ENCODE measurements at regions of chr17 and their contacts with region 1.

Region 1: DNA sequence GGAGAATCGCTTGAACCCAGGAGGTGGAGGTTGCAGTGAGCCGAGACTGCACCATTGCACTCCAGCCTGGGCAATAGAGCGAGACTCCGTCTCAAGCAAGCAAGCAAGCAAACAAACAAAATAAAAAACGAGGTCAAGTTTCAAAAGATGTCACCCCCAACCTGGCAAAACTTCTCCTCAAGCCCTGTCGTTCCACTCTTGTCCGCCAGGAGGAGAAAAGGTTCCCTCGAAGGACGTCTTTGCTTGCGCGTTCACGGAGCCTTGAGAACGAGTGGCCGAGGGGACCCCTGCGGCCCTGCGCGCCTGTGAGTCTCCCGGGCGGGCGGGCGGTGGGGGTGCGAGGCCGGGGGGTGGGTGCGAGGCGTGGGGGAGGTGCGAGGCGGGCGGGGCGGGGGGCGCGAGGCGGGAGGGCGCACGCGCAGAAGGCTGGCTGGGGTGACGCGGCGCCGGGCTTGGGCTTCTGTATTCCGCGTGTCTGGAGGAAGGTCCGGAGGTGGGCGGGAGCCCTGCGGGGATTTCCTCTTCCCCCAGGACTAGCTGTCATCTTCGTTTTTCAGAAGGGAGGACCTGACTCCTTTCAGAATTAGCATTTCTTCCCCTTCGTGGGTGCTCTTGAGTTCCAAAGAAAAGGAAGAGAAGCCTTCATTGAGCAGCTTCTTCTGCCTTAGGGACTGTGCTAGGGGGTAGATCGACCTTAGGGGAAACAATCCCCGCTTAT is 3.7 kb downstream of the SLC52A1 start:
- DNase-seq: peak; percentile 87
- H3K4me3 Mint-ChIP-seq: peak overlapping the region; percentile 77
- H3K27ac Mint-ChIP-seq: peak overlapping the region; percentile 94
- H3K4me1 Mint-ChIP-seq: peaks cover 30% of the 10 kb centered on the region
- H3K27me3 Mint-ChIP-seq: no peaks in the 10 kb centered on the region

Region 2: GRCh38 chr17:4858882-4859260 is 172.7 kb before region 1 on chr17:
- CTCF ChIA-PET with region 1: no interaction called
- POLR2A ChIA-PET with region 1: no interaction called
- DNase-seq: no peak
- H3K4me3 Mint-ChIP-seq: no peak overlapping the region
- H3K27ac Mint-ChIP-seq: no peak overlapping the region
- H3K4me1 Mint-ChIP-seq: peaks cover 16% of the 10 kb centered on the region
- H3K27me3 Mint-ChIP-seq: no peaks in the 10 kb centered on the region

Region 3: GRCh38 chr17:5011928-5012327 is 19.6 kb before region 1 on chr17:
- CTCF ChIA-PET with region 1: interaction called, 11 read pairs
- POLR2A ChIA-PET with region 1: no interaction called
- DNase-seq: no peak
- H3K4me3 Mint-ChIP-seq: no peak overlapping the region
- H3K27ac Mint-ChIP-seq: no peak overlapping the region
- H3K4me1 Mint-ChIP-seq: peaks cover 20% of the 10 kb centered on the region
- H3K27me3 Mint-ChIP-seq: no peaks in the 10 kb centered on the region

Region 4: GRCh38 chr17:5019475-5019956 is 12.0 kb before region 1 on chr17:
- CTCF ChIA-PET with region 1: interaction called, 14 read pairs
- POLR2A ChIA-PET with region 1: interaction called, 3 read pairs
- DNase-seq: peak; percentile 32
- H3K4me3 Mint-ChIP-seq: no peak overlapping the region
- H3K27ac Mint-ChIP-seq: no peak overlapping the region
- H3K4me1 Mint-ChIP-seq: peaks cover 25% of the 10 kb centered on the region
- H3K27me3 Mint-ChIP-seq: no peaks in the 10 kb centered on the region

Region 5: DNA sequence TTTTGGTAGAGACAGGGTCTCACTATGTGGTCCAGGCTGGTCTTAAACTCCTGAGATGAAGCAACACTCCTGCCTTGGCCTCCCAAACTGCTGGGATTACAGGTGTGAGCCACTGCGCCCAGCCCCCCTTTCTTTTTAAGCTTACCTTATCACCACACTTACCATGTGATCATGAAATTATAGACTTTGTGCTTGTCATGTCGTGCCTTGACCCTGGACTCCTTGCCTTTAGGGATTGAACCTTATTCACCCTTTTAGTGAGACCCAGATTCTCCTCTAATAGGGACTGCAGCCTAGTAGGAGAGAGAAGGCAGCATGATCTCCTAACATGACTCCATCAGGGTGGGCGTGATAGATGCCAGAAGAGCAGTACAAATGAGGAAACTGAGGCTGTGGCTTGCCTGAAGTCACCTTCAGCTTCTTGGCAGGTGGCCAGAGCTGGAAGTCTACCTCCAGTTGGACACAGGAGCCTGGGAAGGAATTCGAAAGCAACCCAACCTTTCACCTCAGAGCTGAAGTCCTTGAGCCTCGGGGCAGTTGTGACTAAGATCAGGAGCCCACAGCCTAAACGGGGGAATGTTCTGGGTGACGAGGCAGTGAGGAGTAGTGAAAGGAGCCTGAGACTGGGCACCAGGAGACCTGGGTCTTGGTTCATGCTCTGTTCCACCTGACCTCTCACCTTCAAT is 13.0 kb after region 1 on chr17:
- CTCF ChIA-PET with region 1: interaction called, 11 read pairs
- POLR2A ChIA-PET with region 1: no interaction called
- DNase-seq: no peak
- H3K4me3 Mint-ChIP-seq: peak overlapping the region; percentile 16
- H3K27ac Mint-ChIP-seq: no peak overlapping the region
- H3K4me1 Mint-ChIP-seq: peaks cover 74% of the 10 kb centered on the region
- H3K27me3 Mint-ChIP-seq: no peaks in the 10 kb centered on the region

Region 6: DNA sequence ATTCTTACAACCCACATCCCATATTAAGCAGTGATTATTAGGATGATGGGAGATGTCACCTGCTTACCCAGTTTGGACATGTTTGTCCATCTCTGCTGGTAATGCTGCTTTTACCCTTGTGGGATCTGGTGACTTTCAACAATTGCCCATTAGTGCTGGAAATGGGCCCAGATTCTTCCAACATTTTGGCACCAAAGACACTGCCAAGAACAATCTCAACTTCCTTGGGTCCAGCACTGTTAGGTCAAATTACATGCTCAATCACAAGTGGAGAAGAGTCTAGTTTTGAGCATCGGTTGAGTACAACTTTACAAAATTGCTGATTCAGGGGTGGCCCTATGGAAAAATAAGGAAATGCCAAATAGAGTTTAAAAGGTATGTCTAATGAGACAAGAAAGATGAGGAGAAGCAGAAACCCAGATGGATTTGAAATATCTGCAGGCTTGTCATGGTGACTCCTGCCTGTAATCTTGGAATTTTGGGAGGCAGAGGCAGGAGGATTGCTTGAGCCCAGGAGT is 33.8 kb after region 1 on chr17:
- CTCF ChIA-PET with region 1: interaction called, 10 read pairs
- POLR2A ChIA-PET with region 1: no interaction called
- DNase-seq: no peak
- H3K4me3 Mint-ChIP-seq: no peak overlapping the region
- H3K27ac Mint-ChIP-seq: no peak overlapping the region
- H3K4me1 Mint-ChIP-seq: peaks cover 12% of the 10 kb centered on the region
- H3K27me3 Mint-ChIP-seq: no peaks in the 10 kb centered on the region

Region 7: GRCh38 chr17:5078106-5079028 is 46.8 kb after region 1 on chr17 and contains the start of gene ZFP3:
- CTCF ChIA-PET with region 1: no interaction called
- POLR2A ChIA-PET with region 1: no interaction called
- DNase-seq: peak; percentile 76
- H3K4me3 Mint-ChIP-seq: peak within 1 kb of the TSS; percentile 83
- H3K27ac Mint-ChIP-seq: peak within 1 kb of the TSS; percentile 86
- H3K4me1 Mint-ChIP-seq: peaks cover 26% of the 10 kb centered on the region
- H3K27me3 Mint-ChIP-seq: no peaks in the 10 kb centered on the region
- total RNA-seq, gene ZFP3: 6.5 to 7.5 TPM

Region 8: DNA sequence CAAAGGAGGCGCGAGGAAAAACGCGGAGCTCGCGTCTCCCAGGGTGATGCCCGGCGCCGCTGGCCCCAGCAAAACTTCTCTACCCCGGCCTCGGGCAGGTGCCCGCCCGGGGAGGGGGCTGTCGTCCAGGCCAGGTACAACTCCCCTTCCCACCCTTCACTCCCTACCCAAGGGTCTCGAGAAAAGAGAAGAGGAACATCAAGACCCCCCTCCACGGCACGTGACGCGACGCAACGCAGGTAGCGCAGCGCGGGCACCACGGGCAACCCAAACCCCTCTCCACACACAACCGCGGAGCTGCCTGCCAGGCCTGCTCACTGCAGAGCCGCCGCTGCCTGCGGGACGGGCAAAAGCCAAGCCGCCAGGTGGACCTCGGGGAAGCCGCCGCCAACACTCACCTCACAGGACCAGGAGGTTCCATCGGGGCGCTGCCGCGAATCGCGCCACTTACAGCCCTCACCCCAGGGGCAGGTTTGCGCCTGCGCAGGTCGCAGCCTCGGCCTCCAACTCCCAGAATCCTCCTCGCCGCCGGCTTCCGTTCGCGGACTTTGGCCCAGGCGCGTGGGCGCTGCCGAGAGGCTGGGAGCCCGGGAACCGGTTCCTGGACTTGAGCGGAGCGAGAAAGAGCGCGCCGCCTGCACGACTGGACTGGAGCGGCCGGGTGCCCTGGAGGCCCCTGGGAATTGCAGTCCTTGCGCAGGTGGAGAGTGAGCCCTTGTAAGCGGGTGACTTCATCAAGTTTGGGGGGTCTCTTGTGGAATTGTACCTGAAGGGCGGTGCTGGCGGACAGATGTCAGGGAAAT is 80.1 kb after region 1 on chr17 and contains the start of gene ZNF232:
- CTCF ChIA-PET with region 1: no interaction called
- POLR2A ChIA-PET with region 1: no interaction called
- DNase-seq: peak; percentile 92
- H3K4me3 Mint-ChIP-seq: peak within 1 kb of the TSS; percentile 76
- H3K27ac Mint-ChIP-seq: peak within 1 kb of the TSS; percentile 71
- H3K4me1 Mint-ChIP-seq: peaks cover 23% of the 10 kb centered on the region
- H3K27me3 Mint-ChIP-seq: peaks cover 13% of the 10 kb centered on the region
- total RNA-seq, gene ZNF232: 9.3 to 12.0 TPM

Region 9: DNA sequence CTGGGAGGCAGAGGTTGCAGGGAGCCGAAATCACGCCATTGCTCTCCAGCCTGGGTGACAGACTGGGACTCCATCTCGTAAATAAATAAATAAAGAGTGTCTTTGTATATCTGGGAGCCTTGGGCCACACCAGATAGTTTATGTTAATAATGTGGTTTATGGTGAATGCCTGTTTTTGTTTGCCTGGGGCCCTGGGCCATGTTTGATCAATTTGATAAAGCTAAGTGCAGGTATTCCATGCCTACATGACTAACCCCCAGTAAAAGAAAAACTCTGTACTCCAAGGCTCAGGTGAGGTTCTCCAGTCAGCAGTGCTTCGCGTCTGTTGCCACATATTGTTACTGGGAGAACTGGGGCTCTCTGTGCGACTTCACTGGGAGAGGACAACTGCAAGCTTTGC is 188.0 kb after region 1 on chr17:
- CTCF ChIA-PET with region 1: no interaction called
- POLR2A ChIA-PET with region 1: no interaction called
- DNase-seq: no peak
- H3K4me3 Mint-ChIP-seq: no peak overlapping the region
- H3K27ac Mint-ChIP-seq: no peak overlapping the region
- H3K4me1 Mint-ChIP-seq: peaks cover 8% of the 10 kb centered on the region
- H3K27me3 Mint-ChIP-seq: no peaks in the 10 kb centered on the region